IMR-90 (cell line): ENCODE measurements at regions of chr17 and their contacts with region 1.

Region 1: DNA sequence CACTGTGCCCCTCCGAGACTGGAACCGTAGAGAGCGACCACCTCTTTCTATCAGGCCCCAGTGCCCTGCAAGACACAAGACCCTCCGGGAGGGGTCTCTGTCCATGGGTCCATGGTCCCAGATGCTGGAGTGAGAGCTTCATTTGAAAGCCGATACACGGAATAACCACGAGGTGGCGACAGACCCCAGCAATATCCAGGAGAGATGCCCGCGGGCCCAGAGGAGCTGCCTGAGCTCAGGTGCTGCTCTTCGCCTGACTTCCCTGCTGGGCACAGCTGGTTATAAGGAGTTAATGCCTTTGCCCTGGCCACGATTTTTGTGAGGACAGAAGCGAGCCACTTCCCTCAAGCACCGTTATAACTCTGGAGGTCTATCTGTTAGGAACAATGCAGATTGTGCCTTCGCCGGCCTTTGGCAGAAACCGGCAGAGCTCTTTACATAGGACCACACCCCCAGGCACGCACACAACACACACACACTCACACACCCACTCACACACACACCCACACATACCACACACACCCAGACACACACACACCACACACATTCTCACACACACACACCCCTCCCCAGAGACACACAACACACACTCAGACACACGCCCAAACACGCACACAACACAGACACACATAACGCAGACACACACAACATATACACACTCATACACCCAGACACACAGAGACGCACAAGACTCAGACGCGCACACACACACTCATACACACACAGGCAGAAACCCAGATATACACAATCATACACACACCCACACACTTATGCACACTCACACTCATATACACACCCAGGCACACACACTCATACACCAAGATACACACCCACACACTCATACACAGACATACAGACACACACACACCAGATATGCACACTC is 436.4 kb downstream of the SOX9 start:
- DNase-seq: peak; percentile 57
- ATAC-seq: peak; percentile 80
- H3K4me3 ChIP-seq: no peak overlapping the region
- H3K27ac ChIP-seq: no peak overlapping the region
- H3K4me1 ChIP-seq: peaks cover 1% of the 10 kb centered on the region; the same call in 1 of the 2 replicates
- H3K27me3 ChIP-seq: no peaks in the 10 kb centered on the region
- CTCF ChIP-seq: peak; percentile 83
- POLR2A ChIP-seq: no peak
- RAD21 ChIP-seq: peak; percentile 90

Region 2: GRCh38 chr17:70636517-70637133 is 1920.6 kb before region 1 on chr17:
- CTCF ChIA-PET with region 1: no interaction called
- POLR2A ChIA-PET with region 1: no interaction called
- dilution Hi-C with region 1: no loop called
- in situ Hi-C with region 1: no loop called
- intact Hi-C with region 1: loop called (anchors 5 kb)
- DNase-seq: peak; percentile 46
- ATAC-seq: peak; percentile 70
- H3K4me3 ChIP-seq: no peak overlapping the region
- H3K27ac ChIP-seq: no peak overlapping the region
- H3K4me1 ChIP-seq: no peaks in the 10 kb centered on the region
- H3K27me3 ChIP-seq: peaks cover 7% of the 10 kb centered on the region; the same call in 1 of the 2 replicates
- CTCF ChIP-seq: peak; percentile 73
- POLR2A ChIP-seq: no peak
- RAD21 ChIP-seq: peak; percentile 79

Region 3: DNA sequence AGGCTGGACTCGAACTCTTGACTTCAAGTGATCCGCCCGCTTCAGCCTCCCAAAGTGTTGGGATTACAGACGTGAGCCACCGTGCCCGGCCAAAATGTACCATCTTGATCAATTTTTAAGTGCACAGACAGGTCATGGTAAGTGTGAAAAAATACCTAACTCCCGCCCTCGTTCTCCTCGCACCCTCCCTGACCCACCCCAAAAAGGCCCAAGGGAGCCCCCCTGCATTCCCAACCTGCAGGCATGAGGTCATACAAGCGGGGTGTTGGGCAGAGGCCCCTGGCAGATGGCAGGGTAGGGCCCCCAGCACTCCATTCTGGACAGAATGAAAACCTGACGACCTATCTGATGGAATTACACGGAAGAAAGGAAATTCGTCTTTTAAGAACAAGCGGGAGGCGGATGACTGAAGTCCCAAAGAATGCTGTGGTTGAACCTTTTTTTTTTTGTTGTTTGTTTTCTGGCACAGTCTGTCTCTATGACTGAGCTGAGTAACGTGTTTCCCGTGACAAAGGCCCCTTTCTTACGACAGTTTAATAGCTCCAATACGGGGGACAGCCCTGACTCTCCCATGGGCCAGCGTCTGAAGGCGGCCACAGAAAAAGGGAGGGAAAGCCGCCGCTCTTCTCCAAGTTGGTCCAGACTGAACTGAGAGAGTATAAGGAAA is 158.9 kb after region 1 on chr17:
- CTCF ChIA-PET with region 1: interaction called, 7 read pairs
- POLR2A ChIA-PET with region 1: no interaction called
- dilution Hi-C with region 1: no loop called
- in situ Hi-C with region 1: no loop called
- intact Hi-C with region 1: loop called (anchors 2 kb)
- DNase-seq: peak; percentile 98
- ATAC-seq: peak; percentile 87
- H3K4me3 ChIP-seq: no peak overlapping the region
- H3K27ac ChIP-seq: peak overlapping the region; percentile 60
- H3K4me1 ChIP-seq: peaks cover 3% of the 10 kb centered on the region; the same call in 1 of the 2 replicates
- H3K27me3 ChIP-seq: no peaks in the 10 kb centered on the region
- CTCF ChIP-seq: no peak
- POLR2A ChIP-seq: peak; percentile 71
- RAD21 ChIP-seq: peak; percentile 16

Region 4: GRCh38 chr17:73156166-73156840 is 599.1 kb after region 1 on chr17:
- CTCF ChIA-PET with region 1: interaction called, 4 read pairs
- POLR2A ChIA-PET with region 1: no interaction called
- dilution Hi-C with region 1: no loop called
- in situ Hi-C with region 1: no loop called
- intact Hi-C with region 1: loop called (anchors 1 kb)
- DNase-seq: peak; percentile 68
- ATAC-seq: peak; percentile 100
- H3K4me3 ChIP-seq: no peak overlapping the region
- H3K27ac ChIP-seq: no peak overlapping the region
- H3K4me1 ChIP-seq: peaks cover 3% of the 10 kb centered on the region; the same call in 1 of the 2 replicates
- H3K27me3 ChIP-seq: peaks cover 18% of the 10 kb centered on the region
- CTCF ChIP-seq: peak; percentile 81
- POLR2A ChIP-seq: no peak
- RAD21 ChIP-seq: peak; percentile 79

Region 5: GRCh38 chr17:73231841-73232586 is 674.8 kb after region 1 on chr17:
- CTCF ChIA-PET with region 1: interaction called, 4 read pairs
- POLR2A ChIA-PET with region 1: no interaction called
- dilution Hi-C with region 1: no loop called
- in situ Hi-C with region 1: no loop called
- intact Hi-C with region 1: loop called (anchors 5 kb)
- DNase-seq: peak; percentile 92
- ATAC-seq: peak; percentile 92
- H3K4me3 ChIP-seq: peak overlapping the region; percentile 82
- H3K27ac ChIP-seq: peak overlapping the region; percentile 77
- H3K4me1 ChIP-seq: peaks cover 12% of the 10 kb centered on the region
- H3K27me3 ChIP-seq: no peaks in the 10 kb centered on the region
- CTCF ChIP-seq: 0 out of 2 replicates have a peak, but pooled peaks have one; percentile 11
- POLR2A ChIP-seq: 0 out of 2 replicates have a peak, but pooled peaks have one; percentile 20
- RAD21 ChIP-seq: peak; percentile 17; the same call in 1 of the 2 replicates